ENCODE measurements at regions of chr10 and their contacts with region 1.

Region 1: DNA sequence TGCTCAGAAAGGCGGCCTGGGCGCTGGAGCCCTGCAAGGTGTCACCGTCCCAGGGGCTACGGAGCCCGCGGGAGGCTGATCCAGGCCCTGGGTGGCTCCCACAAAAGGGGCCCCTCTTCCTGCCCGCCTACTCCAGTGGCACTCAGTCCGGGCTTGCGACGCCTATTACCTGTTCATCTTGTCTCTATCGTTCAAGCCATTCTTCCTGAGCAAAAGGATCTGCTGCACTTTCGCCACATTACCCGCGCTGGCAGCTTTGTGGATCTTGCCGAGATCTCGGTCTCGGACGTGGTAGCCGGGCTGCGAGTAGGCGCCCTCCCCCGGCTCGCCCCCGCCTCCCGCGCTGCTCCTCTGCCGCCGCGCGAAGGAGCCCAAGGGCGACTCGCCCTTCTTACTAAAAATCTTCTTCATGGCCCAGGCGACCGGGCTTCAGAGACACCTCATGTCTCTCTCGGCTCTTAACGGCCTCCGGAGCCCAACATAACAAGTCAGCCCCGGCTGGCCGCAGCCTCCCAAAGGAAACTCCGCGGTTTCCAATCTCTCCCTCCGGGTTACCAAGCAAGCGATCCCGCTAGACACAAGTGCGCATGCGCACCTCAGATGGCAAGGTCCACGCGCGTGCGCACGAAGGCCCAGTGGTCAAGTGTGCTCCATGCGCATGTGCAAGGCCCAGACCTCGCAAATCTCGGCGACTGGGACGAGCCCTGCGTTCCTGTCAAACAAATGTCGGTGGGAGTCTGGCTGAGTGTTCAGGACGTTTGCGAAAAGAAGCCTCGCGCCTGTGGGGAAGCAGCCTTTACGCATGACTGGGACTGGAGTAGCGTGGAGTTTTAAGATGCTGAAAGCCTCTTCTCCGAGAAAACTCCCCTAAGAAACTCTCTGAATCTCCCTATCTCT is at the start of gene ANKRD26:
- DNase-seq: peak; percentile 97
- H3K4me3 Mint-ChIP-seq: peak within 1 kb of the TSS; percentile 85
- H3K27ac Mint-ChIP-seq: peak within 1 kb of the TSS; percentile 95
- H3K4me1 Mint-ChIP-seq: peaks cover 40% of the 10 kb centered on the region
- H3K27me3 Mint-ChIP-seq: peaks cover 2% of the 10 kb centered on the region
- total RNA-seq, gene ANKRD26: 6.7 to 7.1 TPM

Region 2: DNA sequence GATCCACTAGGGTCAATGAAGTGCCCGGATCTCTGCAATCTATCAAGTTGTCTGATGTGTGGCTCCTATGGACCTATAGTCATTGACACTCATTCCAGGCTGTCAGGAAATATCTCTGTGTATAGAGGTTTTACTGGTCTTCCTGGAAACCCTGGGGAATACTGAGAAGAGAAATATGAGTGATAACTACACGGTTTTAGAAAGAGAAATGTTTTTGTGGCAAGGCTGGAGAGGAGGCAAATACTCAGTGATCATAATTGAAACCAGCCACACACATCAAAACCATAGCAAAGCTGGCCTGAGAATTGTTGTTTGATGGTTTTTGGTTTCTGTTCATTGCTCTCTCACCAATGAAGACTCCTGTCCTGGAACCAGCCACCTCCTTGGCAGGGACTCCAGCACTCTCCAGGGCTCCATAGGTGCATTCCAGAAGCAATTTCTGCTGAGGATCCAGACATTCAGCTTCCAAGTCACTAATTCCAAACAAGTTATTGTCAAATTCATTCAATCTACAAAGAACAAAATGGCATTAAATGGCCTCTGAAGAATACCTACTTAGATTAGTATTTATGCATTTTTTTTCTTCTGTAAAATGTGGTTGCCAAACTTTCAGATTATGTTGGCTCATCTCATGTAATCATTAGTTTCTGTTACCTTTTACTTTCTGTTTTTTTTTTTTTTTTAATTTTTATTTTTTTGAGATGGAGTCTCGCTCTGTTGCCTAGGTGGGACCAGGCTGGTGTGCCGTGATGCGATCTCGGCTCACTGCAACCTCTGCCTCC is 130.8 kb before region 1 on chr10:
- CTCF ChIA-PET with region 1: no interaction called
- POLR2A ChIA-PET with region 1: no interaction called
- intact Hi-C with region 1: loop called (anchors 2 kb)
- DNase-seq: peak; percentile 26
- H3K4me3 Mint-ChIP-seq: no peak overlapping the region
- H3K27ac Mint-ChIP-seq: peak overlapping the region; percentile 34
- H3K4me1 Mint-ChIP-seq: peaks cover 21% of the 10 kb centered on the region
- H3K27me3 Mint-ChIP-seq: no peaks in the 10 kb centered on the region

Region 3: DNA sequence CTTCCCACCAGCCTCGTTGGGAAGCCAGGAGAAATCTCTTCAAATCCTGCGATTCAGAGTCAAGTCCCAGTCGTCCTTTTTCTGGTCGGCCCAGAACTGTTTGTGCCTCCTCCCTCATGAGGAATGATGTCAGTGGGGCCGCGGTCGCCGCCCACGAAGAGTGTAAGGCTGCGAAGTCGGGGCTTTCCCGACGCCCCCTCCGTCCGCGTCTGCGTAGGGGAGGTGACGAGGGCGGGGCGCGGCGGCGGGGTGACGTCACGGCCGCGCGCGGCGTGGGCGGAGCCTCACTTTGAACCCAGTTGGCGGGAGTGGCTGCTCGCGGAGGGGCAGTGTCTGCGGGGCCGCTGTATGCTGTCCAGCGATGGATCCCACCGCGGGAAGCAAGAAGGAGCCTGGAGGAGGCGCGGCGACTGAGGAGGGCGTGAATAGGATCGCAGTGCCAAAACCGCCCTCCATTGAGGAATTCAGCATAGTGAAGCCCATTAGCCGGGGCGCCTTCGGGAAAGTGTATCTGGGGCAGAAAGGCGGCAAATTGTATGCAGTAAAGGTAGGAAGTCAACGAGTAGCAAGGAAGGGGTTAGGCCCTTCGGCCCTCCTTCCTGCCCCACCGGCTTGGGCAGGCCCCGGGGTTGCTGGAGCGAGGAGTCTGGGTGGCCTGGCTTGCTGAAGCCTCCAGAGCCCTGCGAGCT is 55.0 kb after region 1 on chr10 and contains the start of gene MASTL:
- CTCF ChIA-PET with region 1: interaction called, 4 read pairs
- POLR2A ChIA-PET with region 1: interaction called, 27 read pairs
- intact Hi-C with region 1: loop called (anchors 1 kb)
- DNase-seq: peak; percentile 96
- H3K4me3 Mint-ChIP-seq: peak within 1 kb of the TSS; percentile 97
- H3K27ac Mint-ChIP-seq: peak within 1 kb of the TSS; percentile 100
- H3K4me1 Mint-ChIP-seq: peaks cover 39% of the 10 kb centered on the region
- H3K27me3 Mint-ChIP-seq: no peaks in the 10 kb centered on the region
- total RNA-seq, gene MASTL: 44.2 to 50.4 TPM

Region 4: GRCh38 chr10:27611236-27611635 is 511.1 kb after region 1 on chr10:
- CTCF ChIA-PET with region 1: no interaction called
- POLR2A ChIA-PET with region 1: no interaction called
- intact Hi-C with region 1: no loop called
- DNase-seq: no peak
- H3K4me3 Mint-ChIP-seq: no peak overlapping the region
- H3K27ac Mint-ChIP-seq: no peak overlapping the region
- H3K4me1 Mint-ChIP-seq: no peaks in the 10 kb centered on the region
- H3K27me3 Mint-ChIP-seq: no peaks in the 10 kb centered on the region